ENCODE measurements at regions of chr7 and their contacts with region 1.

Region 1: GRCh38 chr7:28179120-28180030 is 1.2 kb downstream of the JAZF1 start:
- DNase-seq: peak; percentile 93

Region 2: DNA sequence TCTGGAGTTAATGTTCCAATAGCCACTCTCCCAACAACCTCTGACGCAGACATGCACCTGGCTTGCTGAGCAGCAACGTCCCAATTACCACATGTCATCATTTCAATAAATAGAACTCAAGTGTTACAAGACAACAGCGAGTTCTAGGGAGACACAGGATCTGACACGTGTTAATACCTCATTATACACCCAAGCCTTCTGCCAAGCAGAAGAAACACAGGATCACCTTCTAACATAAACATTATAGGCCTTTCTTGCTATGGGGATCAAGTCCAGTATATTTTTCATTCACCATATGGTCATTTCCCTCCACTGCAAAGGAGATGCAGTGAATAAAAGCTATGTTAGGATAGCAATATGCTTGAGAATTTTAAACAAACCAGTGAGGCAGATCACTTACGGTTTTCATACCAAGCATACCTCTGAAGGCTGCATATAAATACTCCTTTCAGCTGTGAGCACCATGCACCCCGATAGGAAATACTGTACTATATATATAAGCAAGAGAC is 73.0 kb before region 1 on chr7:
- intact Hi-C with region 1: loop called (anchors 5 kb)
- DNase-seq: no peak

Region 3: GRCh38 chr7:28447071-28447470 is 267.7 kb after region 1 on chr7:
- intact Hi-C with region 1: no loop called
- DNase-seq: no peak